Vagina (tissue), 2 donors: ENCODE measurements at regions of chr5 and their contacts with region 1.

Region 1: GRCh38 chr5:172106511-172107356 is 81.3 kb downstream of the STK10 start:
- DNase-seq: no peak
- H3K4me3 ChIP-seq: peak overlapping the region; percentile 26 to 32
- H3K27ac ChIP-seq: peak overlapping the region; percentile 4
- H3K4me1 ChIP-seq: peaks cover 49% of the 10 kb centered on the region
- H3K27me3 ChIP-seq: no peaks in the 10 kb centered on the region
- CTCF ChIP-seq: peak; percentile 81 to 98 (median 84)
- POLR2A ChIP-seq: no peak

Region 2: DNA sequence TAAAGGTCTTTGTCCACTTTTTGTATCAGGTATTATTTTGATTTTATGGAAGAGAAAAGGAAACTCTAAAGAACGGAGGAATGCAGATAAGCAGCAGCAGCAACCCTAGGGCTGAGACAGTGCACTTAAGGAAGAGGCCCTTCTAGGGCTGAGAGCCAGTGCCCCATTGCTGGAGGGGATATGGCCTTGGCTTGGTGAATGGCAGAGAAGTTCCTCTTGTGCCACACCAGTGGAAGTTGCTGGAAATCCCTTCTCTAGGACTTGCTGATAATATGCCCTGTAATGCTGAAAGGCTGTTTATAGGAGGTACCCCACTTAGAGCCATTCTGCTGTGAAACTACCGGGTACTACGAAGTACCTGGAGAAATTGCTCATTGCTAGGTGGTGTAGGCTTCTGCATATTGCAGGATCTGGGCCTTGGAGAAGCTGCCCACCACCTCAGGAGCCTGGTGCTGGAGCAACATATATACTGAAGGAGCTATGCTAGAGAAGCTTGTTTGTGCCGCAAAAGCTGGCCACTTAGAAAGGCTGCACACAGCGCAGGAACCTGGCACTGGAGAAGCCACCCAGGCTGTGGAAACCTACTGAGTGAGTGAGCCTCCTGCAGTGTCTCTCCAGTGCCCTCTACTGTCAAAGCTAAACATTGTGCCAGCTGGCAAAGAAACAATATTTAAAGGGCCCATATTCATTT is 186.5 kb after region 1 on chr5:
- intact Hi-C with region 1: loop called (anchors 5 kb)
- DNase-seq: no peak
- H3K4me3 ChIP-seq: no peak overlapping the region
- H3K27ac ChIP-seq: no peak overlapping the region
- H3K4me1 ChIP-seq: no peaks in the 10 kb centered on the region
- H3K27me3 ChIP-seq: no peaks in the 10 kb centered on the region
- CTCF ChIP-seq: peak; percentile 53 to 69 (median 67)
- POLR2A ChIP-seq: no peak